GM12878 (cell line): ENCODE measurements at regions of chr17 and their contacts with region 1.

Region 1: GRCh38 chr17:74659898-74660297 is 36.4 kb upstream of the CD300E start:
- DNase-seq: no peak
- ATAC-seq: no peak
- H3K4me3 ChIP-seq: no peak overlapping the region
- H3K27ac ChIP-seq: no peak overlapping the region
- H3K4me1 ChIP-seq: 0 out of 2 replicates have a peak, but pooled peaks cover 2% of the 10 kb centered on the region
- H3K27me3 ChIP-seq: peaks cover 0 to 3% of the 10 kb centered on the region in 2 experiments; a peak in 2 of 4 replicates
- CTCF ChIP-seq: no peak
- EP300 ChIP-seq: no peak
- POLR2A ChIP-seq: no peak
- RAD21 ChIP-seq: no peak

Region 2: DNA sequence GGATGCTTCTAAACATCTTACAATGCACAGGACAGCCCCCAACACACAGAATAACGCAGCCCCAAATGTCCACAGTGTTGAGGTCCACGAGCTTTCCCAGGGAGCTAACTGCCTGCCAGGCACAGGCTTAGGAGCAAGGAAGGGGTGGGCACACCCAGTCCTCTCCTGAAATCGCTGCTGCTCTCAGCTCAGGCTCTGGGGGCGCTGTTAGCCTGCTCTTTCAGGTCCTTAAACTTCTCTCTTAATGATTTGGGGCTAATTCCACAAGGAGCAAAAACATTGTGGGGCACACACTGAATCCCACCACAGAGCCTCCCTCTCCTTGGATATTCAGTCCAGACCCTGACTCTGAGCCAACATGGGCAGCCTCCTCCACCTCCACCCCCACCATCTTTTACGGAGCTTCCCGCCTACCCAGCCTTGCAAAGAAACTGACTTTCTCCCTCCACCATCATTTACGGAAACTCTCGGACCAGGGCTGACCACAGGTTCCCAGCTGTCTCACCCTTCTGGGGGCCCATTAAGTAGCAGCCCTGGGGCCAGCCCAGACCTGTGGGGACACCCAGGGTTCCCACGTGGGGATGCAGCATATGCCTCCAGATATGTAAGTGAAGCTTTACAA is 93.7 kb before region 1 on chr17:
- CTCF ChIA-PET with region 1: interaction called, 34 read pairs
- POLR2A ChIA-PET with region 1: no interaction called
- RAD21 ChIA-PET with region 1: interaction called, 17 read pairs
- SMC1A ChIA-PET with region 1: interaction called, 4 read pairs
- in situ Hi-C with region 1: no loop called
- intact Hi-C with region 1: no loop called
- DNase-seq: no peak
- ATAC-seq: peak; percentile 86
- H3K4me3 ChIP-seq: no peak overlapping the region
- H3K27ac ChIP-seq: no peak overlapping the region
- H3K4me1 ChIP-seq: no peaks in the 10 kb centered on the region
- H3K27me3 ChIP-seq: peaks cover 1 to 3% of the 10 kb centered on the region in 2 experiments; a peak in 3 of 4 replicates
- CTCF ChIP-seq: peak; percentile 66 to 78 (median 74)
- EP300 ChIP-seq: no peak
- POLR2A ChIP-seq: no peak
- RAD21 ChIP-seq: peak; percentile 71

Region 3: GRCh38 chr17:74646231-74646630 is 13.7 kb before region 1 on chr17:
- CTCF ChIA-PET with region 1: interaction called, 13 read pairs
- POLR2A ChIA-PET with region 1: no interaction called
- RAD21 ChIA-PET with region 1: interaction called, 6 read pairs
- SMC1A ChIA-PET with region 1: interaction called, 7 read pairs
- in situ Hi-C with region 1: no loop called
- intact Hi-C with region 1: no loop called
- DNase-seq: no peak
- ATAC-seq: peak; percentile 59
- H3K4me3 ChIP-seq: no peak overlapping the region
- H3K27ac ChIP-seq: no peak overlapping the region
- H3K4me1 ChIP-seq: peaks cover 10% of the 10 kb centered on the region
- H3K27me3 ChIP-seq: peaks cover 0 to 5% of the 10 kb centered on the region in 2 experiments; a peak in 2 of 4 replicates
- CTCF ChIP-seq: peak; percentile 46 to 68 (median 50); a peak in 5 of 6 replicates
- EP300 ChIP-seq: no peak
- POLR2A ChIP-seq: no peak
- RAD21 ChIP-seq: peak; percentile 64

Region 4: DNA sequence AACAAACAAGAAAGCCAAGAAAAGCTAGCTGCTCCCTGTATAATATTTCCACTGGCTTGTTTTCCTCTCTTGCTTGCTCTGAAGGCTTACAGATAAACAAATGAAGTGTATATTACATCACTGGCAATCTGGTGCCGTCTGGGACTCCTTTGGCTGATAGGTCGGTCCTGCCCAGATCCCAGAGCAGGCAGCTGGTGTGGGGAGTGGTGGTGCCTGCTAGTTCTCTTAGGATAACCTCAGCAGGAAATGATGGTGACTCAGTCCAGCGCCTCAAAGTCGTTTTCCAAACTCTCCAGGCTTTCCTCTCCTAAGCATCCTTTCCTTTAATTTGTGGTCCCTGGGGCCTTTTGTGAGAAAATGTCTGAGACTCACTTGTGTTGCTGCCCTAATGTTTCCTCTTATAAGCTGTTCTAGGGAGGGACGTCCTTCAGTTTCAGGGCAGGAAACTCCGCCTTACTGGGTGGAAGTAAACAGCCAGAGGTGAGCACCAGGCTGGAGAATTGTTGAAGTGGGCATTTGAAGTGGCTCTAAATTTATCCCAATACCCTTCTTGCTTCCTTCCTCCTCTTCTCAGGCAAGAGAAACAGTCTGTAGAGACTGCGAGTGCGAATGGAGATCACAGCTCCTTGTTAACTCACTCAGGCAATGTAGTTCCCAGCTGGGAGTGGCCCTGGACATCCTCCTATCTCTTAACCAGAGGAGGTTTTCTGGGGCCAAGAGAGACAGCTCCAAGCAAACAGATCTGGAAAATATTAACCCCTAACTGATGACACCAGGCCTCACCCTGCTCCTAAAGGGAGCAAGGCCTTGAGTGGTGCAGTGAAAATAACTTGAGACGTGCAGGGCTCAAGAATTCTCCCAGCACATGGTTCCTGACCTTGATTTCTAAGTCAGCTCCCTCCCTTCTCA is 17.9 kb after region 1 on chr17:
- CTCF ChIA-PET with region 1: interaction called, 18 read pairs
- POLR2A ChIA-PET with region 1: no interaction called
- RAD21 ChIA-PET with region 1: interaction called, 10 read pairs
- SMC1A ChIA-PET with region 1: interaction called, 6 read pairs
- in situ Hi-C with region 1: no loop called
- intact Hi-C with region 1: no loop called
- DNase-seq: no peak
- ATAC-seq: no peak
- H3K4me3 ChIP-seq: no peak overlapping the region
- H3K27ac ChIP-seq: no peak overlapping the region
- H3K4me1 ChIP-seq: 0 out of 2 replicates have a peak, but pooled peaks cover 3% of the 10 kb centered on the region
- H3K27me3 ChIP-seq: peaks cover 0 to 4% of the 10 kb centered on the region in 2 experiments; a peak in 2 of 4 replicates
- CTCF ChIP-seq: no peak
- EP300 ChIP-seq: no peak
- POLR2A ChIP-seq: no peak
- RAD21 ChIP-seq: no peak

Region 5: DNA sequence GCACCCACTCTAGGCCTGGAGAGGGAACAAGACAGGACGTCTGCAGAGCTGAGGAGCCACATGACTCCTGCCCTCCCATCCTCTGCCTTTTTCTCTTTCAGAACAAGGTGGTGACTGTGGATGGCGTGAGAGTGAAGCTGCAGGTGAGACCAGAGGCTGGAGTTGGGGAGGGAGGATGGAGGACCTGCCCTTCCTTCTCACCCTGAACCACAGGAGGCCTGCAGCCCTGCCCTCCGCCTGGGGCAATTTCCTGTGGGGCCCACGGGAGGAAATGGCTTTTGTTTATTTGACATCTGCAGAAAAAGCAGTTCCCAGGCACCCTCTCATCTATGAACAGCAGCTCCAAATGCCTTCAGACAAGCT is 82.2 kb after region 1 on chr17:
- CTCF ChIA-PET with region 1: interaction called, 349 read pairs
- POLR2A ChIA-PET with region 1: interaction called, 37 read pairs
- RAD21 ChIA-PET with region 1: interaction called, 299 read pairs
- SMC1A ChIA-PET with region 1: interaction called, 152 read pairs
- in situ Hi-C with region 1: loop called (anchors 5 kb)
- intact Hi-C with region 1: loop called (anchors 1 kb)
- DNase-seq: peak; percentile 69
- ATAC-seq: peak; percentile 31
- H3K4me3 ChIP-seq: no peak overlapping the region
- H3K27ac ChIP-seq: peak overlapping the region; percentile 80
- H3K4me1 ChIP-seq: peaks cover 47% of the 10 kb centered on the region
- H3K27me3 ChIP-seq: no peaks in the 10 kb centered on the region
- CTCF ChIP-seq: no peak
- EP300 ChIP-seq: 0 out of 4 replicates have a peak, but pooled peaks of 1 of the 2 experiments have one; percentile 6
- POLR2A ChIP-seq: 0 out of 2 replicates have a peak, but pooled peaks have one; percentile 43
- RAD21 ChIP-seq: no peak

Region 6: DNA sequence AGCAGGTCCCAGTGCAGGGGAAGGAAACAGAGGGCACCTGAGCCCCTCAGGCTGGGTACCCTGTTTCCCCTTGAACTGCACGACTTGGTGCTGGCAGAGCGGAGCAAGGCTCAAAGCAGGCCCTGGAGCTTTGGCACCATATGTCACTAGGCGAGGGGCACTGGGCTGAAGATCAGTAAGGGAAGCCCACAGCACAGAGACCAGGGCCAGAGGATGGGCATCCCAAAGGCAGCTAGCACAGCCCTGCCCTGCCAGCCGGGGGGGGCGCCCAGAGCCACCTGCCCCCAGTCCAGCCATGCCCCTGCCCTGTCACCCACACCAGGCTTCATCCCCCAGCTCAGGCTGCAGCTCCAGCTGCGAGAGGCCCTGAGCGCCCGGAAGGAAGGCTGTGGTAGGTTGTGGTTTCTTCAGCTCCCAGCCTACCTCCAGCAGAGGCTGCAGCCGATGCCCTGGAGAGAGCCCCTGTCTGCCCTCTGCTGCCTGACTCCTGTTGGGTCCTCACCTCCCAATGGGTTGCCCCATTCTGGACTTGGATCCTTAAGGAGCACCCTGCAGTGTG is 99.4 kb after region 1 on chr17:
- CTCF ChIA-PET with region 1: interaction called, 10 read pairs
- POLR2A ChIA-PET with region 1: interaction called, 5 read pairs
- RAD21 ChIA-PET with region 1: interaction called, 12 read pairs
- SMC1A ChIA-PET with region 1: interaction called, 8 read pairs
- in situ Hi-C with region 1: no loop called
- intact Hi-C with region 1: no loop called
- DNase-seq: no peak
- ATAC-seq: peak; percentile 90
- H3K4me3 ChIP-seq: no peak overlapping the region
- H3K27ac ChIP-seq: peak overlapping the region; percentile 1
- H3K4me1 ChIP-seq: peaks cover 21% of the 10 kb centered on the region
- H3K27me3 ChIP-seq: no peaks in the 10 kb centered on the region
- CTCF ChIP-seq: peak; percentile 16 to 32 (median 30); a peak in 3 of 6 replicates
- EP300 ChIP-seq: no peak
- POLR2A ChIP-seq: no peak
- RAD21 ChIP-seq: peak; percentile 28

Region 7: DNA sequence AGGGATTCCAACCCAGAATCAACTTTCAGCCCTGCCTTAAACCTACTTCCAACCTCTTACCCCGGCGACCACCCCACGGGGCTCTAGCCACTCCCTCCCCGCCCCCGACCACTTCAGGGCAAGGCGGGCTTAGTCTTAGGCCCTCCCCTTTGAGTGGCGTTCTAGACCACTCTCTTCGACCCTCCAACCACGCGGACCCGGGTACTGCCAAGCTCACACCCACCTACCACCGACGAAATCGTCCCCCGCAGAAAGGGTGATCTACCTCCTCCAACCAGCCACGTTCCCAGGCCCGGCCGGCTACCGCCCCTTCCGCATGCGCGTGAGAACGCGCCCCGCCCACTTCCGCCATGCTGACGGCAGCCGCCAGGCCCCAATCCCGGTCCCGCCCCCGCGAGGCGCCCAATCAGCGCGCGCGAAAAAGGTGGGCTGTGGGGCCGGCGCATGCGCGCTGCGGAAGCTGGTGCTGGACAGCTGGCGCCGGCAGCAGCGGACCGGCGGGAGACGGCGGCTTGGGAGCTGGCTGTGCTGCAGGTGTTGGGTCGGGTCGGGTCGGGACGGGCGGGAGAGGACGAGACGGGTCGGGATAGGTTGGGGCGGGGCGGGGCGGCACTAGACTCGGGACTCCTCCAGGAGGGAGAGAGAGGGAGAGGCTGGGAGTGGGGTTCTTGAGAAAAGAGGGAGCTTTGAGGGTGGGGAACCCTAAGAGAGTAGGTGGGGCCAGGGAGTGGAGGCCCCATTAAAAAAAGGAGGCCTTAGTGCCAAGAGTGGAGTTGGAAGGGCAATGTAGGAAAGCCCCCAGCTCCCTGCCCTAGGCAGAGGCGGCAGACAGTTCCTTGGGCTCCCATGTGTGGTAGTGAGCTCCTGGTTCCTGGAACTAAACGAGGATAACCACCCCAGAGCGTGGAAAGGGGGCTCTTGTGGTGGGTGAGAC is 116.4 kb after region 1 on chr17 and contains the start of gene NAT9:
- CTCF ChIA-PET with region 1: interaction called, 25 read pairs
- POLR2A ChIA-PET with region 1: no interaction called
- RAD21 ChIA-PET with region 1: interaction called, 10 read pairs
- SMC1A ChIA-PET with region 1: interaction called, 13 read pairs
- in situ Hi-C with region 1: no loop called
- intact Hi-C with region 1: loop called (anchors 2 kb)
- DNase-seq: peak; percentile 82
- ATAC-seq: peak; percentile 91
- H3K4me3 ChIP-seq: peak within 1 kb of the TSS; percentile 73
- H3K27ac ChIP-seq: peak within 1 kb of the TSS; percentile 59
- H3K4me1 ChIP-seq: peaks cover 28% of the 10 kb centered on the region
- H3K27me3 ChIP-seq: no peaks in the 10 kb centered on the region
- CTCF ChIP-seq: no peak
- EP300 ChIP-seq: no peak
- POLR2A ChIP-seq: peak; percentile 89
- RAD21 ChIP-seq: no peak
- polyA plus RNA-seq, gene NAT9: 3.5 to 4.5 TPM

Region 8: GRCh38 chr17:75059369-75060345 is 399.8 kb after region 1 on chr17:
- CTCF ChIA-PET with region 1: no interaction called
- POLR2A ChIA-PET with region 1: no interaction called
- RAD21 ChIA-PET with region 1: no interaction called
- SMC1A ChIA-PET with region 1: no interaction called
- in situ Hi-C with region 1: no loop called
- intact Hi-C with region 1: no loop called
- DNase-seq: no peak
- ATAC-seq: no peak
- H3K4me3 ChIP-seq: no peak overlapping the region
- H3K27ac ChIP-seq: no peak overlapping the region
- H3K4me1 ChIP-seq: no peaks in the 10 kb centered on the region
- H3K27me3 ChIP-seq: no peaks in the 10 kb centered on the region
- CTCF ChIP-seq: peak in 2 of 3 experiments; percentile 19 to 34; a peak in 2 of 6 replicates
- EP300 ChIP-seq: no peak
- POLR2A ChIP-seq: no peak
- RAD21 ChIP-seq: peak; percentile 38; the same call in 1 of the 2 replicates